A549 (cell line): ENCODE measurements at regions of chr9 and their contacts with region 1.

Region 1: GRCh38 chr9:27276193-27277030 is 20.5 kb downstream of the EQTN start:
- DNase-seq: peak; percentile 34 to 61
- ATAC-seq: peak; percentile 82 to 89
- H3K4me3 ChIP-seq: peak overlapping the region; percentile 27; the same call in 1 of the 3 replicates
- H3K27ac ChIP-seq: no peak overlapping the region
- H3K4me1 ChIP-seq: no peaks in the 10 kb centered on the region
- CTCF ChIP-seq: peak; percentile 89
- EP300 ChIP-seq: no peak
- POLR2A ChIP-seq: no peak
- RAD21 ChIP-seq: peak; percentile 80 to 83

Region 2: GRCh38 chr9:27019589-27019988 is 256.8 kb before region 1 on chr9:
- CTCF ChIA-PET with region 1: interaction called, 12 read pairs
- POLR2A ChIA-PET with region 1: no interaction called
- DNase-seq: peak in 1 of 2 experiments; percentile 9
- ATAC-seq: no peak
- H3K4me3 ChIP-seq: no peak overlapping the region
- H3K27ac ChIP-seq: peak overlapping the region in 1 of 2 experiments; percentile 64; a peak in 2 of 6 replicates
- H3K4me1 ChIP-seq: peaks cover 8% of the 10 kb centered on the region; the same call in 2 of the 3 replicates
- CTCF ChIP-seq: no peak
- EP300 ChIP-seq: no peak
- POLR2A ChIP-seq: no peak
- RAD21 ChIP-seq: no peak

Region 3: GRCh38 chr9:27033823-27034403 is 242.5 kb before region 1 on chr9:
- CTCF ChIA-PET with region 1: interaction called, 31 read pairs
- POLR2A ChIA-PET with region 1: no interaction called
- DNase-seq: peak; percentile 50 to 59
- ATAC-seq: peak; percentile 76 to 87; a peak in 5 of 6 replicates
- H3K4me3 ChIP-seq: no peak overlapping the region
- H3K27ac ChIP-seq: no peak overlapping the region
- H3K4me1 ChIP-seq: no peaks in the 10 kb centered on the region
- CTCF ChIP-seq: peak; percentile 85
- EP300 ChIP-seq: no peak
- POLR2A ChIP-seq: no peak
- RAD21 ChIP-seq: peak; percentile 78

Region 4: GRCh38 chr9:27204578-27204977 is 71.8 kb before region 1 on chr9:
- CTCF ChIA-PET with region 1: no interaction called
- POLR2A ChIA-PET with region 1: no interaction called
- DNase-seq: no peak
- ATAC-seq: no peak
- H3K4me3 ChIP-seq: no peak overlapping the region
- H3K27ac ChIP-seq: no peak overlapping the region
- H3K4me1 ChIP-seq: no peaks in the 10 kb centered on the region
- CTCF ChIP-seq: no peak
- EP300 ChIP-seq: no peak
- POLR2A ChIP-seq: no peak
- RAD21 ChIP-seq: no peak

Region 5: GRCh38 chr9:27261517-27262211 is 14.7 kb before region 1 on chr9:
- CTCF ChIA-PET with region 1: interaction called, 40 read pairs
- POLR2A ChIA-PET with region 1: no interaction called
- DNase-seq: no peak
- ATAC-seq: no peak
- H3K4me3 ChIP-seq: no peak overlapping the region
- H3K27ac ChIP-seq: no peak overlapping the region
- H3K4me1 ChIP-seq: no peaks in the 10 kb centered on the region
- CTCF ChIP-seq: no peak
- EP300 ChIP-seq: no peak
- POLR2A ChIP-seq: no peak
- RAD21 ChIP-seq: no peak

Region 6: GRCh38 chr9:27292659-27293405 is 16.4 kb after region 1 on chr9:
- CTCF ChIA-PET with region 1: interaction called, 11 read pairs
- POLR2A ChIA-PET with region 1: no interaction called
- DNase-seq: no peak
- ATAC-seq: no peak
- H3K4me3 ChIP-seq: no peak overlapping the region
- H3K27ac ChIP-seq: no peak overlapping the region
- H3K4me1 ChIP-seq: no peaks in the 10 kb centered on the region
- CTCF ChIP-seq: no peak
- EP300 ChIP-seq: no peak
- POLR2A ChIP-seq: no peak
- RAD21 ChIP-seq: no peak